ENCODE measurements at regions of chr1 and their contacts with region 1.

Region 1: DNA sequence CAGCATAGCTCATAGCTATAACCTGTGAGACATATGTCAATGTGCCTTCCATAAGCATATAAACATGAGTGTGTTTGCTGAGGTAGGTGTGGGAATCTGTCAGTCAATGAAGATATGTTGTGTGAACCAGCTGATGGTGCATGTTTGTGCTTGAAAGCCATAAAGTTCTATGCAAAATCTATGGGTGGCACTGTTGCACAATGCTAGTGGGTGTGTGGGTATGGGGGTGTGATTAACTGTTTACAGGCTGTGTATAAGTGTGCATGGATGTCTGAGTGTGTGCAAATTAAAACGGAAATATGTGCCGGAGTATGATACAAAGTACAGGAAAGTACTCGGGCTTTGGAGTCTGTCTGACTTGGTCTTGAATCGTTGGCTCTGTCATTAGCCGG is 1.0 kb upstream of the ATP2B4 start:
- DNase-seq: peak; percentile 82
- ATAC-seq: peak; percentile 40
- H3K4me3 Mint-ChIP-seq: peak overlapping the region; percentile 97
- H3K27ac Mint-ChIP-seq: peak overlapping the region; percentile 87
- H3K4me1 Mint-ChIP-seq: peaks cover 63% of the 10 kb centered on the region
- H3K27me3 Mint-ChIP-seq: no peaks in the 10 kb centered on the region

Region 2: GRCh38 chr1:203504397-203505250 is 121.0 kb before region 1 on chr1:
- CTCF ChIA-PET with region 1: interaction called, 14 read pairs
- DNase-seq: peak; percentile 84
- ATAC-seq: peak; percentile 85
- H3K4me3 Mint-ChIP-seq: no peak overlapping the region
- H3K27ac Mint-ChIP-seq: no peak overlapping the region
- H3K4me1 Mint-ChIP-seq: peaks cover 6% of the 10 kb centered on the region
- H3K27me3 Mint-ChIP-seq: peaks cover 14% of the 10 kb centered on the region

Region 3: DNA sequence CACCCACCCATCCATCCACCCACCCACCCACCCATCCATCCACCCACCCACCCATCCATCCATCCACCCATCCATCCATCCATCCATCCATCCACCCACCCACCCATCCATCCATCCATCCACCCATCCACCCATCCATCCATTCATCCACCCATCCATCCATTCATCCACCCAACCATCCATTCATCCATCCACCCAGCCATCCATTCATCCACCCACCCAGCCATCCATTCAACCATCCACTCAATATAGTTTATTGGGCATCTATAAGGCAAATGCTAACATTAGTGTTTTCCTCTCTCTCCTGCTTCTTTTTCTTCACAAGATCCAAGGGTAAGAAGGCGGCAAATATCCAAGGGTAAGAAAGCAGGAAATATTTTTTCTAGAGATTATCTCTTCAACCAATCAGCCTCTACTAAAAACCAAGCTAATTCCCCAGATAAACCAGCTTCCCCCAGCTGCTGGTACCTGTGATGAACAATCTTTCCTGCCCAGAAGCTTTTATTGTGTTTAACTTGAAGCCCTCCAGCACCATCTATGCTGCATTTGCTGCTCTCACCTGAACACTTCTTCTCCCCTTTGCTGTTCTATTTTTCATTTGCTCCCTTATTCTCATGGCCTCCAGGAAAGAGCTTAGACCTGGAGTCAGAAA is 21.6 kb before region 1 on chr1:
- CTCF ChIA-PET with region 1: interaction called, 30 read pairs
- DNase-seq: no peak
- ATAC-seq: no peak
- H3K4me3 Mint-ChIP-seq: no peak overlapping the region
- H3K27ac Mint-ChIP-seq: no peak overlapping the region
- H3K4me1 Mint-ChIP-seq: peaks cover 47% of the 10 kb centered on the region
- H3K27me3 Mint-ChIP-seq: no peaks in the 10 kb centered on the region

Region 4: GRCh38 chr1:203649999-203650855 is 24.6 kb after region 1 on chr1:
- CTCF ChIA-PET with region 1: interaction called, 53 read pairs
- DNase-seq: peak; percentile 80
- ATAC-seq: peak; percentile 62
- H3K4me3 Mint-ChIP-seq: peak overlapping the region; percentile 71
- H3K27ac Mint-ChIP-seq: peak overlapping the region; percentile 87
- H3K4me1 Mint-ChIP-seq: peaks cover 83% of the 10 kb centered on the region
- H3K27me3 Mint-ChIP-seq: no peaks in the 10 kb centered on the region

Region 5: GRCh38 chr1:203682473-203683383 is 57.1 kb after region 1 on chr1:
- CTCF ChIA-PET with region 1: interaction called, 18 read pairs
- DNase-seq: peak; percentile 86
- ATAC-seq: peak; percentile 92
- H3K4me3 Mint-ChIP-seq: no peak overlapping the region
- H3K27ac Mint-ChIP-seq: peak overlapping the region; percentile 90
- H3K4me1 Mint-ChIP-seq: peaks cover 48% of the 10 kb centered on the region
- H3K27me3 Mint-ChIP-seq: no peaks in the 10 kb centered on the region

Region 6: GRCh38 chr1:203765029-203765837 is 139.6 kb after region 1 on chr1 and contains the start of gene LAX1:
- CTCF ChIA-PET with region 1: interaction called, 14 read pairs
- DNase-seq: peak; percentile 91
- ATAC-seq: peak; percentile 89
- H3K4me3 Mint-ChIP-seq: peak within 1 kb of the TSS; percentile 87
- H3K27ac Mint-ChIP-seq: peak within 1 kb of the TSS; percentile 100
- H3K4me1 Mint-ChIP-seq: peaks cover 52% of the 10 kb centered on the region
- H3K27me3 Mint-ChIP-seq: no peaks in the 10 kb centered on the region
- total RNA-seq, gene LAX1: 20.3 to 22.3 TPM